ENCODE measurements at regions of chr5 and their contacts with region 1.

Region 1: DNA sequence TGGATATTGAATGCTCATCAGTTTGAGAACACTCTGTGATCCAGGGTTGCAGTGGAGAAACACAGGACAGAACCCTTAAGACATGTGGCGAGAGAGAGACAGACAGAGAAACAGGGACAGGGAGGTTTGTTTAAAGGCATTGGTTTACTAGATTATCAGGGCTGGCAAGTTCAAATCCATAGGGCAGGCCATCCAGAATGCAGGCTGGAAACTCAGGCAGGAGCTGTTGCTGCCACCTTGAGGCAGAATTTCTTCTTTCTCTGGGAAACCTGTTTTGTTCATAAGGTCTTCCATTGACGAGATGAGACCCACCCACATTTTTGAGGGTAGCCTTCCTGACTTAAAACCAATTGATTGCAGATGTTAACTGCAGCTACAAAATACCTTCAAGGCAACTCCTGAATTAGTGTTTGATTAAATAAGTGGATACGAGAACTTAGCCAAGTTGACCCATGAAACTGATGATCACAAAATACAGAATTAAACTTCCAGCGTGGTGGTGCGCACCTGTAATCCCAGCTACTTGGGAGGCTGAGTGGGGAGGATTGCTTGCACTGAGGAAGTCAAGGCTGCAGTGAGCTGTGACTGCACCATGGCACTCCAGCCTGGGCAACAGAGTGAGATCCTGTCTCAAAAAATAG is 55.9 kb downstream of the NSUN2 start:
- DNase-seq: peak; percentile 44
- H3K4me3 ChIP-seq: no peak overlapping the region
- H3K27ac ChIP-seq: no peak overlapping the region
- H3K4me1 ChIP-seq: no peaks in the 10 kb centered on the region
- CTCF ChIP-seq: peak; percentile 75

Region 2: GRCh38 chr5:5886812-5887486 is 690.0 kb before region 1 on chr5:
- CTCF ChIA-PET with region 1: no interaction called
- POLR2A ChIA-PET with region 1: no interaction called
- intact Hi-C with region 1: loop called (anchors 5 kb)
- DNase-seq: peak; percentile 51
- H3K4me3 ChIP-seq: no peak overlapping the region
- H3K27ac ChIP-seq: no peak overlapping the region
- H3K4me1 ChIP-seq: no peaks in the 10 kb centered on the region
- CTCF ChIP-seq: peak; percentile 78

Region 3: GRCh38 chr5:6598351-6598900 is 21.4 kb after region 1 on chr5:
- CTCF ChIA-PET with region 1: no interaction called
- POLR2A ChIA-PET with region 1: no interaction called
- intact Hi-C with region 1: no loop called
- DNase-seq: no peak
- H3K4me3 ChIP-seq: no peak overlapping the region
- H3K27ac ChIP-seq: no peak overlapping the region
- H3K4me1 ChIP-seq: no peaks in the 10 kb centered on the region
- CTCF ChIP-seq: no peak

Measured in OCI-LY7 (cell line).